Activated CD4-positive, alpha-beta T cell treated with anti-CD3 and anti-CD28 coated beads, Interleukin-2, amount 10 ng/mL, durations not matched to agents 24 days and 14 days (primary cell): ENCODE measurements at regions of chr3 and their contacts with region 1.

Region 1: GRCh38 chr3:106333911-106334618 is 465.3 kb upstream of the CBLB start:
- DNase-seq: peak; percentile 77
- H3K4me3 Mint-ChIP-seq: peak overlapping the region; percentile 75
- H3K27ac Mint-ChIP-seq: peak overlapping the region; percentile 91
- H3K4me1 Mint-ChIP-seq: peaks cover 74% of the 10 kb centered on the region
- H3K27me3 Mint-ChIP-seq: no peaks in the 10 kb centered on the region

Region 2: GRCh38 chr3:105366326-105367062 is 967.6 kb before region 1 on chr3 and contains the start of gene ALCAM:
- intact Hi-C with region 1: loop called (anchors 1 kb)
- DNase-seq: peak; percentile 95
- H3K4me3 Mint-ChIP-seq: peak within 1 kb of the TSS; percentile 94
- H3K27ac Mint-ChIP-seq: peak within 1 kb of the TSS; percentile 99
- H3K4me1 Mint-ChIP-seq: peaks cover 45% of the 10 kb centered on the region
- H3K27me3 Mint-ChIP-seq: peaks cover 25% of the 10 kb centered on the region
- total RNA-seq, gene ALCAM: 26.3 and 26.5 TPM in 2 replicates

Region 3: GRCh38 chr3:105827959-105828358 is 506.1 kb before region 1 on chr3:
- intact Hi-C with region 1: loop called (anchors 1 kb)
- DNase-seq: peak; percentile 68
- H3K4me3 Mint-ChIP-seq: peak overlapping the region; percentile 60
- H3K27ac Mint-ChIP-seq: peak overlapping the region; percentile 100
- H3K4me1 Mint-ChIP-seq: peaks cover 73% of the 10 kb centered on the region
- H3K27me3 Mint-ChIP-seq: no peaks in the 10 kb centered on the region

Region 4: DNA sequence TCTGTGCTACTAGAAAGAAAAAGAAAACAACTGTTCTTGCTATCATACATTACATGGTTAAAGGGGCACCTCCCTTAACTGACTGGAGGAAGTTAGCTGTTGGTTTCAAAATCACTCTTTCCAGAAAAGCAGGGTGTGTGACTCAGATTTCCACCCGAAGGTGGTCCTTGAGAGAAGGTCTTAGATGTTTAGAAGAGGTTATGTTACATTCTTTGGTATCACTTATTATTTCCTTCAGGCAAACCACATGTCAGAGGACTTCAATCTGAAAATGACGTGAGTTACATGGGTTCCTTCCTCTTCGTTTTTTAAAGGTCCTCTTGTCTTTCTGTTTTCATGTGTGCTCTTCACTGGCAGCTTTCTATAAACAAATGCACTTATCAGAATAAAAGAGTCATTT is 157.3 kb before region 1 on chr3:
- intact Hi-C with region 1: loop called (anchors 1 kb)
- DNase-seq: peak; percentile 91
- H3K4me3 Mint-ChIP-seq: peak overlapping the region; percentile 77
- H3K27ac Mint-ChIP-seq: peak overlapping the region; percentile 93
- H3K4me1 Mint-ChIP-seq: peaks cover 53% of the 10 kb centered on the region
- H3K27me3 Mint-ChIP-seq: no peaks in the 10 kb centered on the region

Region 5: DNA sequence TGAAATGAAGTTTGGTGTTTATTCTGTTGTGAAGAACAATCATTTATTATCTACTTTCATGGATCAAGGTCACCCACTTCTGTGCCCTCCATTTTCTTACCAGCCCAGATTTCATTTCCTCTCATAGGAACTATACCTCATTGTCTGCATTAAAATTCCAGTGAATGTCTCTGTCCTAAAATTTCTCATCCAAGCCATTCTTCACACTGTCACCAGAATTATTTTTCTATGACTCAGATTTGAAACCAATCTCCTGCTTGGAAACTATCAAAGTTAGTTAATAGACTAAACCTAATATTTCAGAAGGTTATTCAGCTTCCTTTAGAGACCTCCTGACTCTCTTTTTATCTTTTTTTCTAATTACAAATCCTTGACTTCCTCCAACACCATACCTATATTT is 101.1 kb before region 1 on chr3:
- intact Hi-C with region 1: loop called (anchors 1 kb)
- DNase-seq: no peak
- H3K4me3 Mint-ChIP-seq: no peak overlapping the region
- H3K27ac Mint-ChIP-seq: no peak overlapping the region
- H3K4me1 Mint-ChIP-seq: peaks cover 42% of the 10 kb centered on the region
- H3K27me3 Mint-ChIP-seq: no peaks in the 10 kb centered on the region

Region 6: GRCh38 chr3:106317141-106318055 is 16.7 kb before region 1 on chr3:
- intact Hi-C with region 1: no loop called
- DNase-seq: no peak
- H3K4me3 Mint-ChIP-seq: no peak overlapping the region
- H3K27ac Mint-ChIP-seq: peak overlapping the region; percentile 38
- H3K4me1 Mint-ChIP-seq: peaks cover 14% of the 10 kb centered on the region
- H3K27me3 Mint-ChIP-seq: no peaks in the 10 kb centered on the region

Region 7: GRCh38 chr3:106349191-106349881 is 15.3 kb after region 1 on chr3:
- intact Hi-C with region 1: no loop called
- DNase-seq: no peak
- H3K4me3 Mint-ChIP-seq: no peak overlapping the region
- H3K27ac Mint-ChIP-seq: no peak overlapping the region
- H3K4me1 Mint-ChIP-seq: peaks cover 3% of the 10 kb centered on the region
- H3K27me3 Mint-ChIP-seq: no peaks in the 10 kb centered on the region

Region 8: DNA sequence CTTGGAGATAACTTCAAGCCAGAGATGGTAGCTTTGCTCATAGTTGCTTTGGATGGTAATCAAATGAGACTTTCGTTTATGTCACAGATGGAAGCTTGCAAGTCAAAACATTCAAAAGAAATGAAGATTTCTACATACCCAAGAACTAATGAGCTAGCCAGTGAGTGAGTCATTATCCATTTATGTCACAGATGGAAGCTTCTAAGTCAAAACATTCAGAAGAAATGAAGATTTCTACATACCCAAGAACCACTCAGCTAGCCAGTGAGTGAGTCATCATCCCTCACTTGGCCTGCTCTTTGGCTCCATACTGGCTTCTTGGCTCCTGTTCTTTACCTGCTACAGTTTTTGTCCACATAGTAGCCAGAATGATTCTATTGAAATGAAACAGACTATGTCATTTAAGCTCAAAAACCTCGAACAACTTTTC is 94.5 kb after region 1 on chr3:
- intact Hi-C with region 1: loop called (anchors 1 kb)
- DNase-seq: no peak
- H3K4me3 Mint-ChIP-seq: peak overlapping the region; percentile 25
- H3K27ac Mint-ChIP-seq: peak overlapping the region; percentile 96
- H3K4me1 Mint-ChIP-seq: peaks cover 42% of the 10 kb centered on the region
- H3K27me3 Mint-ChIP-seq: no peaks in the 10 kb centered on the region

Region 9: GRCh38 chr3:106635271-106635670 is 301.2 kb after region 1 on chr3:
- intact Hi-C with region 1: no loop called
- DNase-seq: no peak
- H3K4me3 Mint-ChIP-seq: no peak overlapping the region
- H3K27ac Mint-ChIP-seq: no peak overlapping the region
- H3K4me1 Mint-ChIP-seq: no peaks in the 10 kb centered on the region
- H3K27me3 Mint-ChIP-seq: peaks cover 12% of the 10 kb centered on the region

Region 10: DNA sequence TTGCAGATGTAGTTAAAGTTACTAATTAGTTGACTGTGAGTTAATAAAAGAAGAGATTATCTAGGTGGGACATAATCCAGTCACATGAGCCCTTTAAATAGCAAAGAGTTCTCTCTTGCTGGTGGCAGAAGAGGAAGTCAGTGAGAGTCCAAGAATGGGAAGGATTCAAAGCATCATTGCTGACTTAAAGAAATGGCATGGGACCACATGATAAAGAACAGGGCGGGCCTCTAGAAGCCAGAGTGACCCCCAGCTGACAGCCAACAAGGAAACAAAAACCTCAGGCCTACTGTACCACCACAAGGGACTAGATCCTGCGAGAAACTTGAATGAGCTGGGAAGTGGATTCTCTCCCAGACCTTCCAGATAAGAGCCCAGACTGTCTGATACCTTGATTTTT is 596.0 kb after region 1 on chr3:
- intact Hi-C with region 1: no loop called
- DNase-seq: no peak
- H3K4me3 Mint-ChIP-seq: no peak overlapping the region
- H3K27ac Mint-ChIP-seq: no peak overlapping the region
- H3K4me1 Mint-ChIP-seq: no peaks in the 10 kb centered on the region
- H3K27me3 Mint-ChIP-seq: no peaks in the 10 kb centered on the region

Region 11: GRCh38 chr3:107064445-107065060 is 730.5 kb after region 1 on chr3:
- intact Hi-C with region 1: loop called (anchors 10 kb)
- DNase-seq: peak; percentile 89
- H3K4me3 Mint-ChIP-seq: no peak overlapping the region
- H3K27ac Mint-ChIP-seq: no peak overlapping the region
- H3K4me1 Mint-ChIP-seq: peaks cover 17% of the 10 kb centered on the region
- H3K27me3 Mint-ChIP-seq: peaks cover 8% of the 10 kb centered on the region